ENCODE measurements at regions of chr3 and their contacts with region 1.

Region 1: GRCh38 chr3:181700168-181701087 is 11.3 kb upstream of the SOX2 start:
- DNase-seq: peak; percentile 68 to 96 (median 88)

Region 2: GRCh38 chr3:181326637-181327223 is 373.7 kb before region 1 on chr3:
- intact Hi-C with region 1: loop called (anchors 5 kb)
- DNase-seq: peak in 16 of 42 donors; percentile 4 to 77 (median 32)

Region 3: DNA sequence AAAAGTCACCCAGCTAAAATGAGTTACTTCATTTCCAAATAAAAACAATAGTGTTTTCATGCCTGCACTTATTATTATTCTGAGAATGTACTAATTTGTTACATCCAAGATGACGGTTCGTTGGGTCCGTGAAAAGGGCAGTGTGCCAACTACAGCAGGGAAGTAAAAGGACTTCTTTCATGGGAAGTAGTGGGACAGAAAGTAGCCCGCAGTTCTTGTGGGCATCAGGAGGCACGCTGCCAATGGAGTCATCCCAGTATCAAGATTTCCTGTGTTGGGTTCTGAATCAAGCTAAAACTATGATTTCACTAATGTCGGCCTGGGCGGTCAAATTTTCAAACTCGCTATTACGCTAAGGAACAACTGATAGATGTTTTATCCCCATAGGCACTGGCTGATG is 243.2 kb before region 1 on chr3:
- intact Hi-C with region 1: loop called (anchors 5 kb)
- DNase-seq: peak; percentile 78 to 99 (median 93)

Region 4: DNA sequence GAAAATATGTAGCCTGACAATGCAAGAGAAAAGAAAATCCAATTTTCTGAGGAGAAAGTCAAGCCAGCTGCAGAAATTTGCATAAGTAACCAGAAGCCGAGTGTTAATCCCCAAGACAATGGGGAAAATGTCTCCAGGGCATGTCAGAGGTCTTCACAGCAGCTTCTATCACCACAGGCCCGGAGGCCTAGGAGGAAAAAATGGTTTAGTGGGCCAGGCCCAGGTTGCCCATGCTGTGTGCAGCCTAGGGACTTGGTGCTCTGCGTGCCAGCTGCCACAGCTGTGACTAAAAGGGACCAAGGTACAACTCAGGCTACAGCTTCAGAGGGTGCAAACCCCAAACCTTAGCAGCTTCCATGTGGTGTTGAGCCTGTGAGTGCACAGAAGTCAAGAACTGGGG is 189.9 kb before region 1 on chr3:
- intact Hi-C with region 1: no loop called
- DNase-seq: no peak

Region 5: GRCh38 chr3:181521831-181522230 is 178.6 kb before region 1 on chr3:
- intact Hi-C with region 1: no loop called
- DNase-seq: no peak

Region 6: GRCh38 chr3:181567311-181568075 is 132.9 kb before region 1 on chr3:
- intact Hi-C with region 1: loop called (anchors 5 kb)
- DNase-seq: no peak

Region 7: GRCh38 chr3:181596126-181596525 is 104.3 kb before region 1 on chr3:
- intact Hi-C with region 1: no loop called
- DNase-seq: no peak

Region 8: GRCh38 chr3:181629029-181629428 is 71.4 kb before region 1 on chr3:
- intact Hi-C with region 1: no loop called
- DNase-seq: no peak

Region 9: GRCh38 chr3:182618085-182618732 is 917.8 kb after region 1 on chr3:
- intact Hi-C with region 1: loop called (anchors 5 kb)
- DNase-seq: peak in 28 of 42 donors; percentile 3 to 75 (median 38)

Measured in head of caudate nucleus (tissue), 42 donors.